GM23248 (cell line): ENCODE measurements at regions of chr3 and their contacts with region 1.

Region 1: DNA sequence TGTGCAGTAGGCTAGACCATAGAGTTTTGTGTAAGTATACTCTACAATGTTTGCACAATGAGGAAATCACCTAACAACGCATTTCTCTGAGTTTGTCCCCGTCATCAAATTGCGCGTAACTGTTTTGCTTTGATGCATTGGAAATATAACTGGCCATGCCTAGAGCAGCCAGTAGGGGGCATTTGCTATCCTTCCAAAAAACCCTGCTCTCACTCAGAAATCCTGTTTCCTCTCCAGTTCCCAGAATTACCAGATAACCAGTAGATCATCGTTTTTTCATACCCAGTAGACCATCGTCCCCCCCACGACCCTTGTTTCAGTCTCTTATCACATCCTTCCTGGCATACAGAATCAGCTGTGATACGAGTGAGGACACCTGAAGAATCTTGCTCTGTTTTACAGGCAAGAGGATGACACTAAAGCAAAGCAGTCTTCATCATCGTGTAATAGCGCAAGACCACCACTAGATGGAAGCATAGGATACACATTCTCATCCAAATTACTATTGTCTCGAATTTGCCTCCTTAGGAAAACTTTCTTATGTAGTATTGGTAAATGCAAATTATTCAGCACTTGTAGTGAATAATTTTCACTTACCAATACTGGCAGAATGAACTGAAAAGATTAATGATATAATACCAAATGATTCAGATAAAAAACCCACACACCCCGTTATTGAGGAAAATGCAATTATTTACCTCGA is 4.4 kb upstream of the GABRR3 start:
- DNase-seq: peak; percentile 83
- H3K4me3 ChIP-seq: peak overlapping the region; percentile 83
- H3K27ac ChIP-seq: no peak overlapping the region
- H3K4me1 ChIP-seq: no peaks in the 10 kb centered on the region
- H3K27me3 ChIP-seq: 0 out of 2 replicates have a peak, but pooled peaks cover 12% of the 10 kb centered on the region

Region 2: DNA sequence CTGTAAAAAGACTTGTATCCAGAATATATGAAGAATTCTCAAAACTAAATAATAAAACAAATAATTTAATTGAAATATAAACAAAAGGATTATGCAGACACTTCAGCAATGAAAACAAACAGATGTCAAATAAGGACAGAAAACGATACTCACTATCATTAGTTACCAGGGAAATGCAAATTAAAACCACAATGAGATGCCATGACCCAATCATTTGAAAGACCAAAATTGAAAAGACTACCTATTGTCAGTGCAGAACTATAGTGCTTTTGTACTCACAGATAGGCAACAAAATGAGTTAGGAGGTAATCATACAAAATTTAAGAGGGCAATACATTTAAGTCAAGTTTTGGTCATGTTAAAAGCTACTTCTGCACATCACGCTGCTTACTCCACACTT is 282.6 kb after region 1 on chr3:
- in situ Hi-C with region 1: loop called (anchors 10 kb)
- DNase-seq: no peak
- H3K4me3 ChIP-seq: no peak overlapping the region
- H3K27ac ChIP-seq: no peak overlapping the region
- H3K4me1 ChIP-seq: no peaks in the 10 kb centered on the region
- H3K27me3 ChIP-seq: peaks cover 2% of the 10 kb centered on the region

Region 3: DNA sequence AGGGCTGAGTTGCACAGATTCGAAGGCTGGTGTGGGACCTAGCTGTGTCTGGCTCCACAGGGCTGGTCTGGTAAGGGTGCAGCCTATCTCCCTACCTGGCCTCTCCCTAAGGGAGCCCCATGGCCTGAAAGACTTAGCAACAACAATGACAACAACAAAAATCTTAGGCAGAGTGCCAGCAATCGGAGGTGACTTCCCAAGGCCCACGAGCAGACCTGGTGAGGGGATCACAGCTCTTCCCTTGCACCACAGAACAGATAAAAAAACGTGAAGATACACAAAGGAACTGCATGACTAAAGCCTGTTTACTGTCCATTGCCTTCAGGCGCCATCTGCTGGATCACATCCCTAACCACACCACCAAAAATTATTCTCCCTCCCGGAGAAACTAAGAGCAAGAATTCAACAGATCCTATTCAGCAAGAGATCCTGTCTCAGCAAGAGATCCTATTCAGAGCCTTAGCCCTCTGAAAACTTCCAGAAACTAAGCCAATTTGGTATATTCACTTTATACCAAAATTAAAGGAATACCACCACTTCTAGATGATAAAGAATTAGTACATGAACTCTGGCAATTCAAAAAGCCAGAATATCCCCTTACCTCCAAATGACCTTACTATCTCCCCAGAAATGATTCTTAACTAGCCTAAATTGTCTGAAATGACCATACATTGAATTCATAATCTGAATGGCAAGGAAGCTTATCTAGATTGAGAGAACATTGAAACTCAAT is 290.1 kb after region 1 on chr3:
- in situ Hi-C with region 1: loop called (anchors 10 kb)
- DNase-seq: peak; percentile 73
- H3K4me3 ChIP-seq: no peak overlapping the region
- H3K27ac ChIP-seq: no peak overlapping the region
- H3K4me1 ChIP-seq: no peaks in the 10 kb centered on the region
- H3K27me3 ChIP-seq: peaks cover under 1% of the 10 kb centered on the region; the same call in 1 of the 2 replicates